Heart left ventricle (tissue), 16 donors: ENCODE measurements at regions of chr15 and their contacts with region 1.

Region 1: DNA sequence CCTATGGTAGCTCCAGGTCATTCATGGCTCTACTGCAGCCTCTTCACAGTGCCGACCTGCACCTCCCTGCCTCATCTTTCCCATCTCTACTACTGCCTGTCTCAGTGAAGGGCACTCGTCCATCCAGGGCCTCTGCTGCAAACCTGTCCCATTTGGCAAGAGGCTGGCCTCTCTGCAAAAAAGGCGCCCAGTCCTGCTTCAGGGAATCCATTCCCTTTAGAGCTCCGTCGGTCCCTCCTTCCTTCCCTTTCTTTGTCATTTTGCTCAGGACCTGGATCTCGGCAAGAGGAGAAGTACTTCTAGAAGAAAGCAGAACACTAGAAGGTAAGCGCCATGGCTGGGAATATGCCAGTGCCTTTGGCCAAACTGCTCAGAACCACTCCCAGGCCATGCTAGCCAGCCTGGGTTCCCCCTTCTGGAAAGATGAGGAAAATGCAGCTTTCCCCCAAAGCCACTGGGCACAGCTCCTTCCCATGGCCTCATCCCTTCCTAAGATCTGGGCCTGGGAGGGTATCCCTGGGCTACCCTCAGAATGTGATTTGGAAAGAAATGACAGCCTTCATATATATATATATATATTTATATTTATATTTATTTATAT is 6.4 kb upstream of the ISL2 start:
- DNase-seq: peak in 4 of 5 donors; percentile 40 to 63 (median 50)
- ATAC-seq: peak; percentile 62 to 83 (median 73)
- H3K4me3 ChIP-seq: no peak overlapping the region
- H3K27ac ChIP-seq: no peak overlapping the region
- H3K4me1 ChIP-seq: peaks cover 0 to 7% (median 4%) of the 10 kb centered on the region in 12 donors
- H3K27me3 ChIP-seq: peaks cover 7 to 42% (median 25%) of the 10 kb centered on the region in 9 donors
- CTCF ChIP-seq: peak; percentile 41 to 72 (median 58)
- POLR2A ChIP-seq: no peak

Region 2: DNA sequence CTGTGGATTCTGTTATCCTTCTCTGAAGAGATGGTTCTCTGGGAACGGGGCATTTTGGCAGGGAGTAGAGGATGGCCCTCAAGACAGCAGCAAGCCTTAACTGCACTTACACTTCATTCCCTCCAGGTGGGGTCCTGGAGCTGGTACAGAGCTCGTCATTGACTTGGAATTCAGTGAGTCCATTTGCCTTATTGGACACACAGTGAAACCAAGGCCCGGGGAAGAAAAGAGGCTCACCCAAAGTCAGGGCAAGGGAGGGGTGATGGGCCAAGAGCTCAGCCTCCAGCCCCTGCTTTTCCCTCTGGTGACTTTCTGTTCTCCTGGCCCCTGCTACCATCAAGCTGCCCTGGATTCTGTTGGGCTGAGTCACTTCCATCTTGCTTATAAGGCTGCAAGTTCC is 144.5 kb before region 1 on chr15:
- intact Hi-C with region 1: loop called (anchors 2 to 5 kb)
- DNase-seq: no peak
- ATAC-seq: peak in 2 of 4 donors; percentile 11 to 35
- H3K4me3 ChIP-seq: no peak overlapping the region
- H3K27ac ChIP-seq: no peak overlapping the region
- H3K4me1 ChIP-seq: peaks cover 0 to 4% (median 0%) of the 10 kb centered on the region in 12 donors
- H3K27me3 ChIP-seq: peaks cover 0 to 49% (median 5%) of the 10 kb centered on the region in 9 donors
- CTCF ChIP-seq: peak in 11 of 12 donors; percentile 13 to 47 (median 34)
- POLR2A ChIP-seq: no peak

Region 3: GRCh38 chr15:76190834-76191538 is 139.2 kb before region 1 on chr15:
- intact Hi-C with region 1: loop called (anchors 2 to 5 kb)
- DNase-seq: peak; percentile 70 to 86 (median 80)
- ATAC-seq: peak; percentile 75 to 91 (median 86)
- H3K4me3 ChIP-seq: peak overlapping the region in 2 of 12 donors; percentile 15 to 21
- H3K27ac ChIP-seq: no peak overlapping the region
- H3K4me1 ChIP-seq: peaks cover 0 to 17% (median 8%) of the 10 kb centered on the region in 12 donors
- H3K27me3 ChIP-seq: peaks cover 0 to 58% (median 5%) of the 10 kb centered on the region in 9 donors
- CTCF ChIP-seq: peak; percentile 73 to 92 (median 86)
- POLR2A ChIP-seq: no peak

Region 4: DNA sequence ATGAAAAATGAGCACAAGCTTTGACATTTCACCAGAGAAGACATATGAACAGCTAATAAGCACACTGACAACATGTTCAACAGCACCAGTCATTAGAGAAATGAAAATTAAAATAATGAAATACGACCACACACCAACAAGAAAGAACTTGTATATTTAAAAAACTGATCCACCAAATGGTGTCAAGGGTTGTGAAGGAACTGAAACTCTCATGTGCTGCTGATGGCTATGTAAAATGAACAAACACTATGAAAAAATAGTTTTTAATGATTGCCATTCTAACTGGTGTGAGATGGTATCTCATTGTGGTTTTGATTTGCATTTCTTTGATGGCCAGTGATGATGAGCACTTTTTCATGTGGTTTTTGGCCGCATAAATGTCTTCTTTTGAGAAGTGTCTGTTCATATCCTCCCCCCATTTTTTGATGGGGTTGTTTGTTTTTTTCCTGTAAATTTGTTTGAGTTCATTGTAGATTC is 381.2 kb after region 1 on chr15:
- intact Hi-C with region 1: no loop called
- DNase-seq: no peak
- ATAC-seq: no peak
- H3K4me3 ChIP-seq: no peak overlapping the region
- H3K27ac ChIP-seq: no peak overlapping the region
- H3K4me1 ChIP-seq: no peaks in the 10 kb centered on the region
- H3K27me3 ChIP-seq: no peaks in the 10 kb centered on the region
- CTCF ChIP-seq: no peak
- POLR2A ChIP-seq: no peak